Heart left ventricle (tissue), 16 donors: ENCODE measurements at regions of chr5 and their contacts with region 1.

Region 1: DNA sequence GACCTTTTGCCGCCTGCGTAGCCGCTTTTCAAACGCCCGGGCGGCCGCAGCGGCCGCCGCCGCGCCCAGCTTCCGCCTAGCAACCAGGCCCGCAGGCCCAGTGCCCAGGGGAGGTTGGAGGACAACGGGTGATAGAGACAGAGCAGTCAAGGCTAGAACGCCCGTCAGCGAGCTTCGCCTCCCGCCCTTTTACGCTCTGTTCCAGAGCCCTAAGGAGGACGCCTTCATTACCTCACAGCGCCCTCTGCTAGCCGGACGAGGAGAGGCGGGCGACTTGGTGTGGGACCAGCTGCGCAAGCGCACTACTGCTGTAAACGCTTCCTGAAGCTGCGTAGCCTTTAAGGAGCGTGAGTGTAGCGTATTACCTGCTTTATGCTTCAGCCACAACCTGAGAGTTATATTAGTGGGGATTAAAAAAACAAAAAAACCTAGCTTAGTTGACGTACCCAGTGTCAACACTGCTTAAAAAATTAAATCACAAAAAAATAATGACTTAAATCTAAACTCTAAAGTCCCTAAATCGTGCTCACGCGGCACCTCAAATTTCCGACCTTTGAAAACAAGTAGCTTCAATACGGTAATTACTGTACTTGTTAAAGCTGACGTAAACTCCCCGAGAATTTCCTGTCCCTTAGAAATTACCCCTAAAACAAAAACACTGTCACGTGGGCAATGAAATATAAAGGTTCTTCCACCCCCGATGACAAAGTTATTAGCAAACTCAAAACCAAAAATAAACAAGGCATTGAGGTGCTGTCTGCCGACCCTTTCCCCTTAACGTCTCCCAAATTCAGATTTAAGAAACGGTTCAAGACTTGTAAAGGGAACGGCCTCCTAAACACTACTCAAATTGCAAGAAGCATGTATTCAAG is at the start of gene CEP120:
- DNase-seq: peak; percentile 98 to 99 (median 99)
- ATAC-seq: peak; percentile 99 to 100 (median 100)
- H3K4me3 ChIP-seq: peak within 1 kb of the TSS; percentile 64 to 98 (median 88)
- H3K27ac ChIP-seq: peak within 1 kb of the TSS; percentile 79 to 96 (median 90)
- H3K4me1 ChIP-seq: peaks cover 0 to 35% (median 18%) of the 10 kb centered on the region in 12 donors
- H3K27me3 ChIP-seq: no peaks in the 10 kb centered on the region
- CTCF ChIP-seq: peak; percentile 57 to 96 (median 76)
- POLR2A ChIP-seq: peak; percentile 59 to 85
- total RNA-seq, gene CEP120: 10.3 to 16.5 (median 12.4) TPM

Region 2: GRCh38 chr5:123505633-123506032 is 82.1 kb after region 1 on chr5:
- intact Hi-C with region 1: loop called in 5 of 10 experiments (anchors 5 to 10 kb)
- DNase-seq: no peak
- ATAC-seq: peak in 2 of 4 donors; percentile 44 to 56
- H3K4me3 ChIP-seq: no peak overlapping the region
- H3K27ac ChIP-seq: no peak overlapping the region
- H3K4me1 ChIP-seq: no peaks in the 10 kb centered on the region
- H3K27me3 ChIP-seq: no peaks in the 10 kb centered on the region
- CTCF ChIP-seq: no peak
- POLR2A ChIP-seq: no peak

Region 3: DNA sequence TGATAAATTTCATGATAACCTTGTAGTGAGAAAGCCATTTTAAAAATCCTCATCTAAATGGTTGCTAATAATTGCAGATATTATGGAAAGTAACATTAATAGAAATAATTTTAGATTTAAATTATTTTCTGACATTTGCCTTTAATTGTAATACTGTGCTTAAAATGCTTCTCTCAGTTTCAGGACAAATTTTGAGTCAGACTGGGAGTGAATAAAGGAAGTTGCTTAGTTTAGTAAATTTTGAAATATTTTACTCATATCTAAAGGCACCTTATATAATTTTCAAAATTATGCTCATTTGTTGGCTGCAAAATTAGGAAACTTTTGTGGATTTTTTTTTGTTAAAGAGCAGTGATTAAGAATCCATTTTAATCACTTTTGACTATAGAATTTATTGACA is 182.3 kb after region 1 on chr5:
- intact Hi-C with region 1: loop called (anchors 2 to 5 kb)
- DNase-seq: no peak
- ATAC-seq: no peak
- H3K4me3 ChIP-seq: no peak overlapping the region
- H3K27ac ChIP-seq: no peak overlapping the region
- H3K4me1 ChIP-seq: peaks cover 0 to 5% (median 0%) of the 10 kb centered on the region in 12 donors
- H3K27me3 ChIP-seq: no peaks in the 10 kb centered on the region
- CTCF ChIP-seq: no peak
- POLR2A ChIP-seq: no peak

Region 4: GRCh38 chr5:123610665-123611405 is 187.3 kb after region 1 on chr5:
- intact Hi-C with region 1: loop called (anchors 2 to 5 kb)
- DNase-seq: no peak
- ATAC-seq: peak in 3 of 4 donors; percentile 50 to 70 (median 54)
- H3K4me3 ChIP-seq: no peak overlapping the region
- H3K27ac ChIP-seq: no peak overlapping the region
- H3K4me1 ChIP-seq: peaks cover 0 to 7% (median 0%) of the 10 kb centered on the region in 12 donors
- H3K27me3 ChIP-seq: no peaks in the 10 kb centered on the region
- CTCF ChIP-seq: peak; percentile 89 to 99 (median 96)
- POLR2A ChIP-seq: no peak